Endothelial cell of umbilical vein (primary cell): ENCODE measurements at regions of chr1 and their contacts with region 1.

Region 1: DNA sequence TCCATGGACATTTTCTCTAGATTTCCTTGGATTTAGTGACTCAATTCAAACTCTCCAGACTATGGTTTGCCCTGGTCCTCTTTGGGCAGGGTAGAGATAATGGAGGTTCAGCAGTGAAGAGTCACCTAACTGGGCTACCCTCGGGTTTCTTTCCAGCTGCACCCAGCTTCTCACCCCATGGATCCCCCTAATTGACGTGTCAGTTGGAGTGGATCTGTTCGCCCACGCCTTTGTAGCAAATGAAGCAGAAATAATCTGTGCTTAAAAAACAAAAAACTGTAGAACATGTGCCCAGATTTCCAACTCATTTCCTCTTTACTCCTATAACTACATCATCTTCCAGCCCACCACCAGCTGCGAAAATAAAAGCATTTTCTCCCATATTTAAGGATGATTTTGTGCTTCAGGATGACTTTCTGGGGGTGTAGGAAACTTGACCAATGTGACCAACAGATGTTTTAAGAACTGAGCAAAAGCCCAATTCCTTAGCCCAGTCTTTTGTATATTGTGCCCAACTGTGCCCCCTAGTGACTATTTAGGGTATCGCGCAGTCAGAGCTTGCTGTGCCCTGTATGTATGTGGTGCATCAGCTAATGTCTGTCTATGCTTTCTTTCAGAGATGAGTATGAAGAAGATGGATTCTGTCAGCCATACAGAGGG is 66.5 kb upstream of the UBE2U start:
- DNase-seq: peak; percentile 82
- H3K4me3 ChIP-seq: no peak overlapping the region
- H3K27ac ChIP-seq: no peak overlapping the region
- H3K4me1 ChIP-seq: no peaks in the 10 kb centered on the region
- H3K27me3 ChIP-seq: no peaks in the 10 kb centered on the region
- CTCF ChIP-seq: peak; percentile 89
- POLR2A ChIP-seq: no peak

Region 2: DNA sequence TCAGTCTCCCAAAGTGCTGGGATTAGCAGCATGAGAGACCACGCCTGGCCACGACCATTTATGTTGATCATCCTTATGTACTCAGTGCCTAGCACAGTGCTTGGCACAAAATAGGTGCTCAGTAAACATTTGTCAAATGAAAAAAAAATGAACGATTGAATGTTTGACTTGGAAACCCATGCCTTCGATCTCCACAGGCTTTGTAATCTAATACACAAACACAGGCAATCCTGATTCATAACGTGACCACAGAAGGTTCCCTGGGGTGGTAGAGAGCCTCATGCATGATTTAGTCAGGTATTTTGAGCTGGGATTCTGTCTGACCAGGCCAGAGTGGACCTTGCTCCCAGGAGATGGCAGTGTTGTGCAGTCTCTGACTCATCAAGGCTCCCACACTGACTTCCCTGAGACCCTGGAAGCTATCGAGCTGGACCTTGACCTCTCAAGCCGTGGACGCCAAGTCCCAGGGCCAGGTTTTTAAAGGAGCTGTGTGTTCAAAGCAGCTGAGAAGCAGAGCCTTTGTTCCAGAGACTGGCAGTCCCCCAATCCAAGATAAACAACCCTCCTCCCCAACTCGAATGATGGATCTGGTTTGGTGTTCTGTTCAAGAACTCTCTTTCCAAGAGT is 462.5 kb before region 1 on chr1:
- CTCF ChIA-PET with region 1: interaction called, 79 read pairs
- POLR2A ChIA-PET with region 1: no interaction called
- dilution Hi-C with region 1: loop called (anchors 25 kb)
- intact Hi-C with region 1: loop called (anchors 1 kb)
- DNase-seq: peak; percentile 74
- H3K4me3 ChIP-seq: no peak overlapping the region
- H3K27ac ChIP-seq: no peak overlapping the region
- H3K4me1 ChIP-seq: no peaks in the 10 kb centered on the region
- H3K27me3 ChIP-seq: peaks cover 0 to 2% of the 10 kb centered on the region in 2 experiments
- CTCF ChIP-seq: peak; percentile 74 to 83
- POLR2A ChIP-seq: no peak

Region 3: GRCh38 chr1:63773815-63774616 is 362.9 kb before region 1 on chr1 and contains the start of gene ROR1:
- CTCF ChIA-PET with region 1: interaction called, 25 read pairs
- POLR2A ChIA-PET with region 1: no interaction called
- dilution Hi-C with region 1: no loop called
- intact Hi-C with region 1: loop called (anchors 1 kb)
- DNase-seq: peak; percentile 86
- H3K4me3 ChIP-seq: peak within 1 kb of the TSS; percentile 62 to 73 (median 72)
- H3K27ac ChIP-seq: peak within 1 kb of the TSS; percentile 40
- H3K4me1 ChIP-seq: peaks cover 15% of the 10 kb centered on the region
- H3K27me3 ChIP-seq: peaks cover 0 to 5% of the 10 kb centered on the region in 2 experiments
- CTCF ChIP-seq: peak; percentile 42 to 80
- POLR2A ChIP-seq: no peak
- total RNA-seq, gene ROR1: 3.5 and 10.9 TPM in 2 replicates

Region 4: DNA sequence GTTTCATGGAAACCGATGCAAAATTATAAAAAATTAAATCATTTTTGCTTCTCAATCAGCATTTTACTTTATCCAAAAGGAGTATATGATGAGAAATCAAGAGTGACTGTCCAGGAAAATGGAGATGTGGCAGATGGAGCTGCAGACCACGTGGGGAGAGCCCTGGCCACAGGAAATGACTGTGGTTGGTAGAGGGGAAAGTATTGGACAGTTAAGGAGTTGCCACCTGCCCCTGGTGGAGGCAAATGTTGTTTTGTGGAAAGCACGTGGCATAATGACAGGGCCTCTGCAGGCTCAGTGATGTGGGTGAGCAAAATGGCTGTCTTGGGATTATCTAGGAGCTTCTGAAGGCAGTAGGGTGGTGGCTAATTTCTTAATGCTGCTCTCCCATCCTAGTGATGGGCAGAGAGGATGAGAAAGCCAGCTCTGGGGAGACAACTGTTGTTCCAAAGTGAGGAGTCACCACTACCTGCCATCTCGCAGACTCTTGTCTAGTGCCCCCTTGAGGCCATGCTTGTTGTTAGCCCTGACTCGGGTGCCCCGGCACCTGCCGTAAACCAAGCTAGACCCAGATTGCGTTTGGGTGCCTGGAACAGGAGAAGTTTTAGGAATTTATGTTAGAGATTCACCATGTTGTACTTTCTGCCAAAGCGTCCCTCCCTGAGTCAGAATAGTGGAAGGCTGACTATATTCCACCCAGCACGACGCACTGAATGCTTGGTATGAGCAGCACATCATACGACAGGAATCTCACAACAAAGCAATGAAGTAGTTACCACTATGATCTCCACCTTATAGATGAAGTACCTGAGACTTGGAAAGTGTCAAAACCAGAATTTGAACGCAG is 219.1 kb before region 1 on chr1:
- CTCF ChIA-PET with region 1: interaction called, 71 read pairs
- POLR2A ChIA-PET with region 1: no interaction called
- dilution Hi-C with region 1: no loop called
- intact Hi-C with region 1: loop called (anchors 1 kb)
- DNase-seq: no peak
- H3K4me3 ChIP-seq: no peak overlapping the region
- H3K27ac ChIP-seq: no peak overlapping the region
- H3K4me1 ChIP-seq: peaks cover 17% of the 10 kb centered on the region
- H3K27me3 ChIP-seq: peaks cover 0 to 3% of the 10 kb centered on the region in 2 experiments
- CTCF ChIP-seq: peak; percentile 8 to 10
- POLR2A ChIP-seq: no peak

Region 5: DNA sequence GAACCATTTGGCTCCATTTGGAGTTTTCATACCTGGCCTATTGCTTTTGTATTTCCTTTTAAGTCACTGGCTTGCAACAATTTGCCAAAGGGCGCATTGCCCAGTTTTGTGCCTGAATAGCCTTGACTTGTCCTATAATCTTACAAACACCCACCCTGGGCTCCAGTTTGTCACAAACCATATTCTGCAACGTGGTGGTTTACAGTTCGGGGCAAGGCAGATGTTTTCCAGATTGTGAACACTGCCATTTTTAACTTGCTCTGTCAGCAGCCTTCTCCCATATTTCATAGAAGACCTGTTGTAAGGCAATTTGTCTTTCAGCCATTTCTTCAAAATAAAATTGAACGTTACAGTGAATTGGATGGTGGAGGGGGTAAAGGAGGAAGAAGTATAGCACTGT is 13.4 kb after region 1 on chr1:
- CTCF ChIA-PET with region 1: interaction called, 11 read pairs
- POLR2A ChIA-PET with region 1: no interaction called
- dilution Hi-C with region 1: no loop called
- intact Hi-C with region 1: no loop called
- DNase-seq: no peak
- H3K4me3 ChIP-seq: no peak overlapping the region
- H3K27ac ChIP-seq: no peak overlapping the region
- H3K4me1 ChIP-seq: no peaks in the 10 kb centered on the region
- H3K27me3 ChIP-seq: no peaks in the 10 kb centered on the region
- CTCF ChIP-seq: no peak
- POLR2A ChIP-seq: no peak

Region 6: GRCh38 chr1:64203420-64203819 is 66.5 kb after region 1 on chr1 and contains the start of gene UBE2U:
- CTCF ChIA-PET with region 1: no interaction called
- POLR2A ChIA-PET with region 1: no interaction called
- dilution Hi-C with region 1: no loop called
- intact Hi-C with region 1: no loop called
- DNase-seq: no peak
- H3K4me3 ChIP-seq: no peak within 1 kb of the TSS
- H3K27ac ChIP-seq: no peak within 1 kb of the TSS
- H3K4me1 ChIP-seq: no peaks in the 10 kb centered on the region
- H3K27me3 ChIP-seq: peaks cover 0 to 7% of the 10 kb centered on the region in 2 experiments
- CTCF ChIP-seq: no peak
- POLR2A ChIP-seq: no peak
- total RNA-seq, gene UBE2U: not detected in 2 replicates